CD14-positive monocyte (primary cell): ENCODE measurements at regions of chr17 and their contacts with region 1.

Region 1: DNA sequence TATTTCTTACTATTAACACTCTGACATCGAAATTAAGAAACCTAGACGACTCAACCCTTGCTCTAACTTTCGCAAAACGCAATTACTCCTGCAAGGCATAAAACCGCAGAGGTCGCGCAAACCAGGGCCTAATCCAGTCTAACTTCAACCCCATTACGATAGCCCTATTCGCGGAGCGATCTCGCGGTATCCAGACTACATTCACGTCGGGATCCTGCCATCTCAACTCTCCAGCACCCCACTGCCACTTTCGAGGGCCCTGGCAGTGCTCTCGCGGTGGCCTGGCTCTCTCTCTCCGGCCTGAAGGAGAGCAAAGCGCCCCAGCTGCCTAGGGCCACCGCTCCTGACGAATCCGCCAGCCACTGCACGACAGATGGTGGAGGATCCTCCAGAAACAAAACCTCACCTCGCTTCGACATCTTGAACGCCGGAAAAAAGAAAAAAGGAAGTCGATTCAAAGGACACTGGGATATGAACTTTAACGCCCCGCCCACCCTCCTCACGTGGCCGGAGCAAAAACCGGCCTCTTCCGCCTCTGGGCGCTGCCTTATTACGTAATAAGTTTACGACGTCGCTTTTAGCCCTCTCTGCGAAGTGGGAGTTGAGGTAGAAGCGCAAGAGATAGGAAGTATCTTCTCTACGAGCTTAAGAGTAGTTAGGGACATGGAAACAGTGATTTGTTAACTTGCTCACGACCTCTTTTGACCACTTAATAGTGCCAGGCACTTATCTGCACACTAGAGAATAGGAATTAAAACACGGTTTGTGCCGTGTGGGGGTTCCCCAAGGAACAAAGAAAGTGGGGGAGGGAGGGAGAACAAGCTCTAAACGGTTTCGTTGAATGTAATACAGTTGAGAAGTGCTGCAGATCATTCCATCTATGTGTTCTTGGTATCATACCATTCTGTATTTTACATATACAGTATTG is at the start of gene RPL23:
- DNase-seq: peak; percentile 98
- H3K4me3 ChIP-seq: peak within 1 kb of the TSS; percentile 87 to 95 (median 90)
- H3K4me3 Mint-ChIP-seq: peak within 1 kb of the TSS; percentile 91 to 96
- H3K27ac ChIP-seq: peak within 1 kb of the TSS; percentile 90 to 94
- H3K27ac Mint-ChIP-seq: peak within 1 kb of the TSS; percentile 98 to 99 (median 99)
- H3K4me1 ChIP-seq: peaks cover 42 to 51% of the 10 kb centered on the region in 2 donors
- H3K4me1 Mint-ChIP-seq: peaks cover 46% of the 10 kb centered on the region
- H3K27me3 ChIP-seq: no peaks in the 10 kb centered on the region
- H3K27me3 Mint-ChIP-seq: peaks cover 0 to 4% (median 2%) of the 10 kb centered on the region in 3 donors
- CTCF ChIP-seq: no peak
- polyA plus RNA-seq, gene RPL23: 561 to 1,701 (median 618) TPM

Region 2: GRCh38 chr17:38711792-38712571 is 141.6 kb before region 1 on chr17:
- intact Hi-C with region 1: no loop called
- DNase-seq: no peak
- H3K4me3 ChIP-seq: no peak overlapping the region
- H3K4me3 Mint-ChIP-seq: no peak overlapping the region
- H3K27ac ChIP-seq: no peak overlapping the region
- H3K27ac Mint-ChIP-seq: peak overlapping the region in 1 of 7 donors; percentile 37
- H3K4me1 ChIP-seq: peaks cover under 1 to 5% of the 10 kb centered on the region in 2 donors
- H3K4me1 Mint-ChIP-seq: peaks cover 26% of the 10 kb centered on the region
- H3K27me3 ChIP-seq: no peaks in the 10 kb centered on the region
- H3K27me3 Mint-ChIP-seq: peaks cover 0 to 12% (median 0%) of the 10 kb centered on the region in 3 donors
- CTCF ChIP-seq: no peak

Region 3: GRCh38 chr17:38824899-38825761 is 28.4 kb before region 1 on chr17 and contains the start of gene CWC25:
- intact Hi-C with region 1: loop called (anchors 1 to 5 kb)
- DNase-seq: peak; percentile 95 to 99 (median 97)
- H3K4me3 ChIP-seq: peak within 1 kb of the TSS; percentile 80 to 91 (median 82)
- H3K4me3 Mint-ChIP-seq: peak within 1 kb of the TSS; percentile 98 to 100
- H3K27ac ChIP-seq: peak within 1 kb of the TSS; percentile 98 to 100
- H3K27ac Mint-ChIP-seq: peak within 1 kb of the TSS; percentile 99 to 100 (median 100)
- H3K4me1 ChIP-seq: peaks cover 16 to 19% of the 10 kb centered on the region in 2 donors
- H3K4me1 Mint-ChIP-seq: peaks cover 20% of the 10 kb centered on the region
- H3K27me3 ChIP-seq: no peaks in the 10 kb centered on the region
- H3K27me3 Mint-ChIP-seq: peaks cover 3 to 6% (median 4%) of the 10 kb centered on the region in 3 donors
- CTCF ChIP-seq: no peak
- polyA plus RNA-seq, gene CWC25: 7.5 to 63.2 (median 8.4) TPM

Region 4: GRCh38 chr17:38883592-38884526 is 30.3 kb after region 1 on chr17:
- intact Hi-C with region 1: no loop called
- DNase-seq: peak in 2 of 3 donors; percentile 25 to 41
- H3K4me3 ChIP-seq: peak overlapping the region in 1 of 3 experiments; percentile 51
- H3K4me3 Mint-ChIP-seq: peak overlapping the region; percentile 68 to 69
- H3K27ac ChIP-seq: peak overlapping the region; percentile 72 to 74
- H3K27ac Mint-ChIP-seq: peak overlapping the region; percentile 81 to 95 (median 94)
- H3K4me1 ChIP-seq: peaks cover 61 to 63% of the 10 kb centered on the region in 2 donors
- H3K4me1 Mint-ChIP-seq: peaks cover 65% of the 10 kb centered on the region
- H3K27me3 ChIP-seq: no peaks in the 10 kb centered on the region
- H3K27me3 Mint-ChIP-seq: peaks cover 0 to 2% (median 2%) of the 10 kb centered on the region in 3 donors
- CTCF ChIP-seq: peak; percentile 35

Region 5: GRCh38 chr17:38900978-38901656 is 47.6 kb after region 1 on chr17:
- intact Hi-C with region 1: loop called in 1 of 2 experiments (anchors 10 kb)
- DNase-seq: peak; percentile 81 to 84 (median 81)
- H3K4me3 ChIP-seq: peak overlapping the region in 1 of 3 experiments; percentile 65
- H3K4me3 Mint-ChIP-seq: peak overlapping the region; percentile 63 to 77
- H3K27ac ChIP-seq: peak overlapping the region; percentile 77 to 82
- H3K27ac Mint-ChIP-seq: peak overlapping the region; percentile 87 to 97 (median 94)
- H3K4me1 ChIP-seq: peaks cover 66 to 68% of the 10 kb centered on the region in 2 donors
- H3K4me1 Mint-ChIP-seq: peaks cover 79% of the 10 kb centered on the region
- H3K27me3 ChIP-seq: no peaks in the 10 kb centered on the region
- H3K27me3 Mint-ChIP-seq: no peaks in the 10 kb centered on the region
- CTCF ChIP-seq: no peak

Region 6: DNA sequence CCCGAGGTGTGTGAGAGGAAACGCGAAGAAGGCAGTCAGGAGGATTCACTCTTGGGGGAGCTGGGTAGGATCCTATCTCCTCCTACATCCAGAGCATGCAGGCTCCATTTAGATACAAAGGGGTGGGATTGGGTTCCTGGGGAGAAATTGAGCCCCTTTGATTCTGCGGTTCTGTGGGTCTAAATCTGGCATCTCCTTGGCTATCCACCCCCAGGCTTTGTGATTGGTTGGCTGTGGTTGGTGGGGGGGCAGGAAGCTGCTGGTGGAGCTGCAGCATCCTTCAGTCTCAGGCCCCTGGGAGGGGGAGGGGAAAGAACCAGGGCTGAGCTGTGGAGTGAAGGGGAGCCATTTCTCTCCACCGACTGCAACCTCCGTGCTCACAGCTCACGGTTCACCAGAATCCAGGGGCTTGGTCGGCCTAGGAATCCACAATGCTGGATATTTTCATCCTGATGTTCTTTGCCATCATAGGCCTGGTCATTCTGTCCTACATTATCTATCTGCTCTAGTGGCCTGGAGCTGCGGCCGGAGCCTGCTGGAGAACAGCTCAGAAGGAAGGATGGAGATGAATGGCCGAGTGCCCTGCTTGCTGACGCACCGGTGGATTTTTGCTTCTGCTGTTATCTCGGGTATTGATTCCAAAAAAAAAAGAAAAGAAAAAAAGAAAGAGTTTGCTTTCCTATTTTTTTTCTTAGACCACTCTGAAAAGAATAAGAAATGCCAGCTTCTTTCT is 71.9 kb after region 1 on chr17 and contains the start of gene LASP1NB:
- intact Hi-C with region 1: no loop called
- DNase-seq: no peak
- H3K4me3 ChIP-seq: peak within 1 kb of the TSS in 1 of 3 experiments; percentile 7
- H3K4me3 Mint-ChIP-seq: no peak within 1 kb of the TSS
- H3K27ac ChIP-seq: peak within 1 kb of the TSS; percentile 58 to 71
- H3K27ac Mint-ChIP-seq: peak within 1 kb of the TSS; percentile 71 to 89 (median 84)
- H3K4me1 ChIP-seq: peaks cover 33 to 47% of the 10 kb centered on the region in 2 donors
- H3K4me1 Mint-ChIP-seq: peaks cover 49% of the 10 kb centered on the region
- H3K27me3 ChIP-seq: no peaks in the 10 kb centered on the region
- H3K27me3 Mint-ChIP-seq: no peaks in the 10 kb centered on the region
- CTCF ChIP-seq: no peak

Region 7: GRCh38 chr17:38994026-38994425 is 140.5 kb after region 1 on chr17:
- intact Hi-C with region 1: no loop called
- DNase-seq: no peak
- H3K4me3 ChIP-seq: no peak overlapping the region
- H3K4me3 Mint-ChIP-seq: no peak overlapping the region
- H3K27ac ChIP-seq: no peak overlapping the region
- H3K27ac Mint-ChIP-seq: no peak overlapping the region
- H3K4me1 ChIP-seq: peaks cover 10 to 12% of the 10 kb centered on the region in 2 donors
- H3K4me1 Mint-ChIP-seq: peaks cover 16% of the 10 kb centered on the region
- H3K27me3 ChIP-seq: no peaks in the 10 kb centered on the region
- H3K27me3 Mint-ChIP-seq: peaks cover 0 to 2% (median 0%) of the 10 kb centered on the region in 3 donors
- CTCF ChIP-seq: no peak